IMR-90 (cell line): ENCODE measurements at regions of chr3 and their contacts with region 1.

Region 1: DNA sequence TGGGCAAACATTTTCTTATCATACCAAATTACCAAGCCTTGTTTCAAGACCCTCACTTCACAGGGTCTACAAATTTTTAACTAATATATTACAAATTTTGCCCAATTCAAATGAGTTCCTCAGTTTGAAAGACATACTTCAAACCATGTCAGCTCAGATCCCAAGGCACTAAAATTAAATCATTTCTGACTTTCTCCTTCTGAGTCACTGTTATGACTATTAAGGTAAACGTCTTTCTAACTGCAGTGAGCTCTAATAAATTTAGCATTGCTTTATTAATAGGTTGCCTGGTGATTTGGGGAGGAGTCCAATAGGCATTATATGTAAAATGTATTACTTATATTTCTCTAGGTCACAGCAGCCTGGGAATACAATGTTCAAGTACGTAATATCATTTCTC is 158.2 kb upstream of the ARHGEF26 start:
- DNase-seq: no peak
- ATAC-seq: no peak
- H3K4me3 ChIP-seq: no peak overlapping the region
- H3K27ac ChIP-seq: no peak overlapping the region
- H3K4me1 ChIP-seq: no peaks in the 10 kb centered on the region
- H3K27me3 ChIP-seq: no peaks in the 10 kb centered on the region
- CTCF ChIP-seq: no peak
- POLR2A ChIP-seq: no peak
- RAD21 ChIP-seq: no peak

Region 2: GRCh38 chr3:153927107-153927506 is 35.9 kb before region 1 on chr3:
- CTCF ChIA-PET with region 1: no interaction called
- POLR2A ChIA-PET with region 1: no interaction called
- dilution Hi-C with region 1: no loop called
- in situ Hi-C with region 1: no loop called
- intact Hi-C with region 1: loop called (anchors 2 kb)
- DNase-seq: peak; percentile 60
- ATAC-seq: peak; percentile 77
- H3K4me3 ChIP-seq: no peak overlapping the region
- H3K27ac ChIP-seq: no peak overlapping the region
- H3K4me1 ChIP-seq: no peaks in the 10 kb centered on the region
- H3K27me3 ChIP-seq: no peaks in the 10 kb centered on the region
- CTCF ChIP-seq: peak; percentile 31
- POLR2A ChIP-seq: no peak
- RAD21 ChIP-seq: no peak